ENCODE measurements at regions of chr1 and their contacts with region 1.

Region 1: DNA sequence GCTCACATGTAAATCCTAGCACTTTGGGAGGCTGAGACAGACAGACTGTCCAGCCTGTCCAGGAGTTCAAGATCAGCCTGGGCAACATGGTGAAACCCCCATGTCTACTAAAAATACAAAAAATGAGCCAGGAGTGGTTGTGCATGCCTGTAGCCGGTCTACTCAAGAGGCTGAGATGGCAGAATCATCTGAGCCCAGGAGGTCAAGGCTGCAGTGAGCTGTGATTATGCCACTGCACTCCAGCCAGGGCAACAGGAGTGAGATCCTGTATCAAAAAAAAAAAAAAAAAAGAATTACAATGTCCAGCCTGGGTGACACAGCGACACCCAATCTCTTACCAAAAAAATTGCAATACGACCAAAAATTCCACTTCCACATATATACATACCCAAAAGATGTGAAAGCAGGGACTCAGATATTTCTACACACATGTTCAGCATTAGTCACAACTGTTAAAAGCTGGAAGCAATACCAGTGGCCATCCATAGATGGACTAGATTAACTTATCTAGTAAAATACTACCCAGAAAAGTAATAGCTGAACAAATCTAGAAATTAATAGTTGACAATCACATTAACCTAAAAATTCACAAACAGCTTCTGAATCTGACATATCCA is 49.2 kb downstream of the ASH1L start:
- DNase-seq: no peak
- ATAC-seq: no peak
- H3K4me3 ChIP-seq: no peak overlapping the region
- H3K27ac ChIP-seq: no peak overlapping the region
- H3K4me1 ChIP-seq: peaks cover 4% of the 10 kb centered on the region
- H3K27me3 ChIP-seq: no peaks in the 10 kb centered on the region

Region 2: DNA sequence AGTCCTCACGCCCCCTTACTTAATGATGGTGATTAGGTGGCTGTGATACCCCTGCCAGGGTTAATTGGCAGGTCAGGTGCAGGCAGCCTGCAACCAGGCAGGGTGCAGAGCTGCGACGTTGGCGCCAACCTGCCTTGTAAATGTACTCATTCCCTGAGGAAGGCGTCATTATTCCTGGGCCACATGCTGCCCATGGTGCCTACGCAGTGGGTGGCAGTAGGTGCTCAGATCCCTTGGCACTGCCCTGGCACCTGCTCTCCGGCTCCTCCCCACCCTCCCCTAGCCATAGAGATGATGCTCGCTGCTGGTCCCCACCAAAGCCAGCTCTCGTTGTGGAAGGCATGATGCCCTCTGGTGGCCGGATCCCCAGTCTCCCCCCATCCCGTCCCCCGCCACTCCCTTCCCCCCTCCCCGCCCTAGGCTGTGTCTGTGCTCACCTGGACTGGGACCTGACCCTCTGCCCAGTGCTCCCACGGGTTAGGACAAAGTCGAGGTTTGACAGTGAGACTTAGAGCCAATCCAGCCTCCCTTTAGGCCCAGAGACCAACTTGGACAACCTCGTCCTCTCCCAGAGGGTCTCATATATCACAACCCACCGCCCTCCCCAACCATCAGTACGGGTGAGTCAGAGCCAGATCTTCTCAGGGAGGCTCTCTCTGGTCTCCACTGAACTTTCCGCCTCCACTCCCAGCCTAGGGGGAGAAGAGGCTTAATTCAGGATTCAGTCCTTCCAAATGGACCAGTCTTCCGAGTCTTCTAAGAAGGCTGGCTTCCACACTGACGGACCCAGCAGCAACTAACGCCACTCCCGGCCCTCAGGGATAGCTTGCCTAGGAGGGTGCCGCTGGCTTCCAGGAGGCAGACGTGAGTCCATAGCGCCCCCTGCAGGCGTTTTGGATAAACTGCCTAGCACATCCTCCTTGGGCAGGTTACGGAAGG is 346.0 kb before region 1 on chr1:
- intact Hi-C with region 1: no loop called
- DNase-seq: peak; percentile 92 to 95 (median 94)
- ATAC-seq: peak; percentile 77 to 79
- H3K4me3 ChIP-seq: no peak overlapping the region
- H3K27ac ChIP-seq: peak overlapping the region; percentile 80
- H3K4me1 ChIP-seq: peaks cover 2% of the 10 kb centered on the region
- H3K27me3 ChIP-seq: no peaks in the 10 kb centered on the region

Region 3: DNA sequence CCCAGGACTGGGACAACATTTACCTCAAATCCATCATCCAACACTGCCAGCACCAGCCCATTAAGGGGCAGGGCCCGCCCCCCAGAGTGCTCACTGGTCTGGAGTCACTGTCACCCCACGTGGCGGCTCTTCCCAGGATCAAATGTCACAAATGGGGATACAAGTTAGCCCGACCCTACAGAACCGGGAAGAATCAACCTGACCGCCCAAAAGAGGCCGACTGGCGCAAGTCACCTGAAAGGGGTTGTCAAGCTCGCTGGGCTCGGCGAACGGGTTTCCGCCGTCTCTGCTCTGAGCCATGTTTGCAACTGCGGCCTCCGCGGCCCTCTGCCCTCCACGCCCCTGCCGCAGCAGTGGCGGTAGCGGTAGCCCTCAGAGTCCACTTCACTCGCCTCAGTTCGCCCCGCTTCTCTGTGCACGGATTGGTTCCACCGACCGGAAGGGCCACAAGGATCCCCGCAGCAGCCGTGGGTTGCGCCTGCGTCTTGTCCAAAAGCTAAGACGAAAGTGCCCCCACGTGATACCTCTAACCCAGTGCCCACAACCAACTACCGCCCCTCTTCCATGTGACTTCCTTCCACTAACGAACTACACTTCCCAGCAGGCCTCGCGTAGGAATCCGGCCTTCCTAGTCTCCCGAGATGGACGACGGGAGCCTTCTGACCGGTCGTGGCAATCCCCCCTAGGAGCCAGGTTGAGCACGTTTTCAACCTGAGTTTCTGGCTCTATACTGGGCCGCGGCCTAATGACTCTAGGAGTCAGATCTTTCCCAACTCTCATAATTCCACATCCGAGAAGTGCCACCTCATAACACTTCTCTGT is 251.3 kb before region 1 on chr1 and contains the start of gene SCAMP3:
- intact Hi-C with region 1: loop called in 1 of 4 experiments (anchors 10 kb)
- DNase-seq: peak; percentile 95 to 97 (median 96)
- ATAC-seq: peak; percentile 98
- H3K4me3 ChIP-seq: peak within 1 kb of the TSS; percentile 76
- H3K27ac ChIP-seq: peak within 1 kb of the TSS; percentile 69
- H3K4me1 ChIP-seq: peaks cover 7% of the 10 kb centered on the region
- H3K27me3 ChIP-seq: no peaks in the 10 kb centered on the region
- total RNA-seq, gene SCAMP3: 50.3 to 65.2 (median 54.9) TPM

Measured in right cardiac atrium (tissue), 5 donors.